GM13976 (cell line): ENCODE measurements at regions of chr17 and their contacts with region 1.

Region 1: GRCh38 chr17:61927200-61928165 is at the start of gene INTS2:
- DNase-seq: peak; percentile 95
- CTCF ChIP-seq: no peak

Region 2: DNA sequence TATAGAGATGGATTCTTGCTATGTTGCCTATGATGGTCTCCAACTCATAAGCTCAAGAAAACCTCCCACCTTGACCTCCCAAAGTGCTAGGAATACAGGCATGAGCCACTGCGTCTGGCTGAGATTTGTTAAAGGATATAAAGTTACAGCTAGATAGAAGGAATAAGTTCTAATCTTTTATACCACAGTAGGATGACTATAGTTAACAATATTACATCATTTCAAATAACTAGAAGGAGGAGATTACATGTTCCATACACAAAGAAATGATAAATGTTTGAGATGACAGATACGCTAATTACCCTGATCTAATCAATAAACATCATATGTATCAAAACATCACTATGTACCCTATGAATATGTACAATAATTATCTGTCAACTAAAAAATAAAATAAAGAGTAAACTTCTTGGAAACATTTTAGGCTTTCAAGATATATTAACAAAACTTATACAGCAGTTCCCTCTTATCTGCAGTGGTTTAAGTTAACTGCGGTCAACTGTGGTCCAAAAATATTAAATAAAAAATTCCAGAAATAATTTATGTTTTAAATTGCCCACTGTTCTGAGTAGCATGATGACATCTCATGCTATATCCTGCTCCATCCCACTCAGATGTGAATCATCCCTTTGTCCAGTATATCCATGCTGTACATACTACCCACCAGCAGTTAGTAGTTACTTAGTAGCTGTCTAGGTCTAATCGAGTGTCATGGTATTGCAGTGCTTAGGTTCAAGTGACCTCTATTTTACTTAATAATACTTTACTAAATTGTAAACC is 207.3 kb before region 1 on chr17:
- in situ Hi-C with region 1: no loop called
- DNase-seq: no peak
- CTCF ChIP-seq: no peak

Region 3: DNA sequence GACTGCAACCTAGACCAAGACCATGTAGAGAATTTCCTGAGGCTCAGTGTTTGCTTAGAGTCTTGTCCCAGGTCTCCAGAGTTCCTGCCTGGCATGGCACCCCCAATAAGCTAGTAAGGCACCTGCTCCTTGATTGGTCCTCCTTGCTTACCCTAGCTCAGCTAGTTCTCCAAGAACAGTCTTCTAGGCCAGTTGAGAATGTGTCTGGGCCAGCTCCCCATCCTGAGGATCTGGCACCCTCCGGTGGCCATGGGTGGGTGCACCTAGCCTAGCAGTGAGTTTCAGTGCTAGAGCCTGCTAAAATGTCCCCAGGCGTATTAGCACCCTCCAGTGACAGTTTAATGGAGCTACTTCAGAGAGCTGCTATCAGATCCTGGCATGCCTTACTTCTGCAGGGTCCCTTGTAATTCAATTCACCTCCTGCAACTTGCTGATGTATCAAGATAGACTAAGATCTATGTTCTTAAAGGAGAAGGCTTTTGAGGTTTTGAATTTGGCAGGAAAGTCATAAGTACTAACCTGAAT is 182.0 kb after region 1 on chr17:
- in situ Hi-C with region 1: loop called (anchors 10 kb)
- DNase-seq: peak; percentile 77
- CTCF ChIP-seq: peak; percentile 95